ENCODE measurements at regions of chr7 and their contacts with region 1.

Region 1: DNA sequence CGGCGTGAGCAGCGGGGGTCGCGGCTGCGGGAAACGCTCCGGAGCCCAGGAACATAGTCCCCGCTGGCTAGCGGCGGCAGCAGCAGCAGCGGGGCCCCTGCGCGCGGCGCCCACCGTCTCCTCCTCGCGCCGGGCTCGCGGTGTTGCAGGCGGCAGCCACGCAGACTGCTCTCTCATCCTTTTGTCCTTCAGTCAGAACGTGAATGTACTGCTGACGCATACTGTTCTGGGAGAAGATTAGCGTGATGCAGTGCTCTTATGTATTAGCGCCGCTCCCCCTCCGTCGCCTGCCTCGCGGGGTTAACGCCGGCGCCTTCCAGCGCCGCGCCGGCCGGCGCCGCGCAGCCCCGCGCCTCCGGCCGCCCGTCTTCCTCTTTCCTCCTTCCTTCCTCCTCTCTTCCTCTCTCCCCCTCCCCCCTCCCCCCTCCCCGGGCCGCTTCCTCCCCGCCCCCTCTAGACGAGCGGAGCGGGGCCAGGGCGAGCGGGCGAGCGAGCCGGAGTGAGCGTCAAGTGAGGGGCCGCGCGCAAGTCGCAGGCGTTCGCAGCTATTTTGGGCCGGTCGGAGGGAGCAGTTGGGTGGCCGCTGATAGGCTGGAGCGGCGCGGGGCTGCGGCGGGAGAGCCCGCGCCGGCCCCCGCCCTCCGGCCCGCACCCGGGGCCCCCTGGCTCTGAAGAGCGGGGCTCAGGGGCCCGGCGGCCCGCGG is 816 bp upstream of the LRRC4 start:
- DNase-seq: peak; percentile 81
- H3K4me3 Mint-ChIP-seq: peak overlapping the region; percentile 74
- H3K27ac Mint-ChIP-seq: no peak overlapping the region
- H3K4me1 Mint-ChIP-seq: peaks cover 13% of the 10 kb centered on the region
- H3K27me3 Mint-ChIP-seq: peaks cover 6% of the 10 kb centered on the region

Region 2: GRCh38 chr7:127585044-127585953 is 446.8 kb before region 1 on chr7 and contains the start of gene GCC1:
- CTCF ChIA-PET with region 1: no interaction called
- intact Hi-C with region 1: loop called (anchors 5 kb)
- DNase-seq: peak; percentile 94
- H3K4me3 Mint-ChIP-seq: peak within 1 kb of the TSS; percentile 89
- H3K27ac Mint-ChIP-seq: peak within 1 kb of the TSS; percentile 70
- H3K4me1 Mint-ChIP-seq: peaks cover 66% of the 10 kb centered on the region
- H3K27me3 Mint-ChIP-seq: no peaks in the 10 kb centered on the region
- total RNA-seq, gene GCC1: 11.0 to 12.0 TPM

Region 3: GRCh38 chr7:127745445-127745844 is 286.6 kb before region 1 on chr7:
- CTCF ChIA-PET with region 1: no interaction called
- intact Hi-C with region 1: loop called (anchors 1 kb)
- DNase-seq: peak; percentile 27
- H3K4me3 Mint-ChIP-seq: no peak overlapping the region
- H3K27ac Mint-ChIP-seq: peak overlapping the region; percentile 19
- H3K4me1 Mint-ChIP-seq: peaks cover 51% of the 10 kb centered on the region
- H3K27me3 Mint-ChIP-seq: no peaks in the 10 kb centered on the region

Region 4: GRCh38 chr7:128059143-128059988 is 27.3 kb after region 1 on chr7:
- CTCF ChIA-PET with region 1: no interaction called
- intact Hi-C with region 1: loop called (anchors 2 kb)
- DNase-seq: peak; percentile 29
- H3K4me3 Mint-ChIP-seq: no peak overlapping the region
- H3K27ac Mint-ChIP-seq: no peak overlapping the region
- H3K4me1 Mint-ChIP-seq: peaks cover 49% of the 10 kb centered on the region
- H3K27me3 Mint-ChIP-seq: no peaks in the 10 kb centered on the region

Measured in activated naive CD4-positive, alpha-beta T cell treated with anti-CD3 and anti-CD28 coated beads for 36 hours (primary cell).